ENCODE measurements at regions of chr14 and their contacts with region 1.

Region 1: GRCh38 chr14:95157327-95158189 is at the start of gene DICER1:
- DNase-seq: peak; percentile 90 to 98 (median 94)
- ATAC-seq: peak; percentile 84
- H3K4me3 ChIP-seq: peak within 1 kb of the TSS; percentile 87
- H3K4me3 Mint-ChIP-seq: peak within 1 kb of the TSS; percentile 98
- H3K27ac ChIP-seq: peak within 1 kb of the TSS; percentile 89 to 95
- H3K27ac Mint-ChIP-seq: peak within 1 kb of the TSS; percentile 99
- H3K4me1 ChIP-seq: peaks cover 40% of the 10 kb centered on the region
- H3K4me1 Mint-ChIP-seq: peaks cover 42% of the 10 kb centered on the region
- H3K27me3 ChIP-seq: no peaks in the 10 kb centered on the region
- H3K27me3 Mint-ChIP-seq: no peaks in the 10 kb centered on the region
- CTCF ChIP-seq: no peak
- total RNA-seq, gene DICER1: 75.0 to 77.1 TPM

Region 2: DNA sequence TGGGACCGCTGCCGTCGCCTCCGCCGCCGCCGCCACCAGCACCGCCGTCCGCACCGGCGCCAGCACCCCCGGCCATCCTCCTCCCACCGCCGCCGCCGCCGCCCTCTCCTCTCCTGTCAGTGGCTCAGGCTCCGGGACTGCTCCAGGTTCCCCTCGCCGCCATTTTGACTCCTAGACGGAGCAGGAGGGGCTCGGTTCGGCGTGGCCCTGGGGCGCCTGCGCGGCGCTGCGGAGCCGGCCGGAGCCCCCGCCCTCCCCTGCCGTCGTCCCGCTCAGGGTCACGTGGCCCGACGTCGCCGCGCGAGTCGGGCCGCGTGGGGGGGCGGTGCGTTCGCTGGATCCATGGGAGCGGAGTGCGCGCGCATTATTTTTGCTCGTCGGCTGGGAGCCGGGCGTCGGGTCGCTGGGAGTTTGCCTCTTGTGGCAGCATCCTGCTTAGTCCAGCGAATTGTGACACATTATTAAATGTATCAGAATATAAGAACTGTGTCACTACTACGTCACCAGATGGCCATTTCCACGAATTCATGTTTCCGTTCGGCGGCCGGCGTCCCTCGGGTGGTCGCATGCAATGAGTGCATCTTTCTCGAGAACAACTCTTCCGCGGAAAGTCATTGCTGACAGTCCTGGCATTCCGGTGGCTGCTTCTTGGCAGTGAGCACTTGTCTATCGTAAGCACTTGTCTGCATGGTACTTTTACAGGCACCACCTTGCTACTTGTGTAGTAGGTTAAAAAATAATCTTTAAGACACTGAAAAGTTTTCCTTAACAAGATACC is 1824.5 kb before region 1 on chr14 and contains the start of gene BTBD7:
- CTCF ChIA-PET with region 1: no interaction called
- POLR2A ChIA-PET with region 1: no interaction called
- intact Hi-C with region 1: loop called (anchors 5 kb)
- DNase-seq: peak; percentile 87 to 98 (median 94)
- ATAC-seq: peak; percentile 92
- H3K4me3 ChIP-seq: peak within 1 kb of the TSS; percentile 81 to 85
- H3K4me3 Mint-ChIP-seq: peak within 1 kb of the TSS; percentile 95
- H3K27ac ChIP-seq: peak within 1 kb of the TSS; percentile 80 to 83
- H3K27ac Mint-ChIP-seq: peak within 1 kb of the TSS; percentile 95
- H3K4me1 ChIP-seq: peaks cover 27% of the 10 kb centered on the region
- H3K4me1 Mint-ChIP-seq: peaks cover 50% of the 10 kb centered on the region
- H3K27me3 ChIP-seq: no peaks in the 10 kb centered on the region
- H3K27me3 Mint-ChIP-seq: no peaks in the 10 kb centered on the region
- CTCF ChIP-seq: no peak
- total RNA-seq, gene BTBD7: 22.9 to 23.5 TPM

Region 3: DNA sequence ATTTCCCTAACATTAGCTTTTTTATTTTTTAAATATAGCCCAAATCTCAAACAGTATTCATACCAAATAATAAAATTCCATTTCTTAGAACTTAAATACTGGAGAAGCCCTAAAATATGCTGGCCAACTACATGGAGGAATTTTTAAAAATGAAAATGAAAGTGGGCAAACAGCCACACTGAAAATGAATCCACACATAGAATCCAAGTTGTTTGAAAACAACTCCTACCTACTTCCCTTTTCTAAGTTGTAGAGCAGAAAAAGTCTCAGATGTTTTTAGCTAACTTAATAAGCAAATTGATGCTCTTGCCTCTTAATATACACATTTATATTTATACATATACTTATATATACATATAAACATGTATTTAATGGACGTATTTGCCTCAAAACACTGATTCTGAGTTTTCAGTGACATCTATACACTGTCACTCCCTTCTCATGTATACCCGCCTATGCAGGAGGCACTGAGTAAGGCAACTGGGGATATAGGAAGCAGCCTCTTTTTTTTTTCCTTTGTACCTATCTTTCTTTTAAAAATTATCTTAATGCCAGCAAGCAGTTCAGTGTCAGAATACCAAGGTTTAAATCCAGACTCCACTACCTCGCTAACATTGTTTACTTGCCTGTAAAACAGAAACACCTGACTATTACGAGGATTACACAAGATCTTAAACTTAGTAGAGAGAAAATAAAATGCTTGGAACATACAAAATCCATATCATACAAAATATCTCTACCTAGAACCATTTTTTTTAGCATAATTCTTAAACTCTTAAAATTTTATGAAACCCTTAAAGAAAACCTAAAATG is 13.5 kb before region 1 on chr14:
- CTCF ChIA-PET with region 1: no interaction called
- POLR2A ChIA-PET with region 1: interaction called, 6 read pairs
- intact Hi-C with region 1: loop called in 1 of 2 experiments (anchors 1 kb)
- DNase-seq: no peak
- ATAC-seq: no peak
- H3K4me3 ChIP-seq: no peak overlapping the region
- H3K4me3 Mint-ChIP-seq: no peak overlapping the region
- H3K27ac ChIP-seq: no peak overlapping the region
- H3K27ac Mint-ChIP-seq: no peak overlapping the region
- H3K4me1 ChIP-seq: peaks cover 38% of the 10 kb centered on the region
- H3K4me1 Mint-ChIP-seq: peaks cover 76% of the 10 kb centered on the region
- H3K27me3 ChIP-seq: no peaks in the 10 kb centered on the region
- H3K27me3 Mint-ChIP-seq: no peaks in the 10 kb centered on the region
- CTCF ChIP-seq: no peak

Region 4: DNA sequence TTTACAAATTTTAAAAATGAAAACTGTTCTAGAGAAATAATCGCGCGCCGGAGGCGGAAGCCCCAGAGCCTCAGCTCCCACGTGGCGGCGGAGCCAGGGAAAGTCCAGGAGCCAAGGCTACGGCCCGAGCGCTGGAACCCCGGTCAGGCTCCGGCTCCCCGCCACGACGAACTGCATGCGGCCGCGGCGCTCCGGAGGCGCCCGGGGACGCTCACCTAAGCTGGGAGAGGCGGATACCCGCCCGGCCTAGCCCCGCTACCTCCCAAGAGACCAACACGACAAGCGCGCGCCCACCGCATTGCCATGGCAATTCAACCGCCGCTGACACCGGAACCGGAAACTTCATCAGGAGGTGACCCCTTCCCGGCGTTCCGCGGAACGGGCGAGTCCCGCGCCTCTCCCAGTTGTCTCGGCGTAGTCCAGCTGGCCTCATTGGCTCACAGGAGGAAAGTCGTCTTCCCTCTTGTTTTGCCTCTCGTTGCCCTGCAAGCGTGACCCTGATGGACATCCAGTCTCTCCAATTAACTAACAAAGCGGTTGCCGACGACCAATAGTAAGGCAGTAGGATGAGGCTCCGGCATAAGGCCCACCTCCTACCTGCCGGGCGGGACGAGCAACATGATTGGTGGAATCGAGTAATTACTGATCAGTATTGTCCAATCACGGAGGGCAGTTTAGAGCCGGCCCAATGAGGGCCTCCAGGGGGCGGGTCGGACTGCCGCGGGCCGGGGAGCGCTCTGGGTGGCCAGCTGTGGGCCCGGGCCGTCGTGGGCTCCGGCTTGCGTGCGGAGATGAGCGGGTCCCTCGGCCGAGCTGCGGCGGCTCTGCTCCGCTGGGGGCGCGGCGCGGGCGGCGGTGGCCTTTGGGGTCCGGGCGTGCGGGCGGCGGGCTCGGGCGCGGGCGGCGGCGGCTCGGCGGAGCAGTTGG is 377.0 kb after region 1 on chr14 and contains the start of gene GLRX5:
- CTCF ChIA-PET with region 1: no interaction called
- POLR2A ChIA-PET with region 1: no interaction called
- intact Hi-C with region 1: loop called (anchors 1 to 5 kb)
- DNase-seq: peak; percentile 94 to 100 (median 97)
- ATAC-seq: peak; percentile 85
- H3K4me3 ChIP-seq: peak within 1 kb of the TSS; percentile 68 to 76
- H3K4me3 Mint-ChIP-seq: peak within 1 kb of the TSS; percentile 90
- H3K27ac ChIP-seq: peak within 1 kb of the TSS; percentile 77 to 92
- H3K27ac Mint-ChIP-seq: peak within 1 kb of the TSS; percentile 95
- H3K4me1 ChIP-seq: peaks cover 46% of the 10 kb centered on the region
- H3K4me1 Mint-ChIP-seq: peaks cover 71% of the 10 kb centered on the region
- H3K27me3 ChIP-seq: no peaks in the 10 kb centered on the region
- H3K27me3 Mint-ChIP-seq: no peaks in the 10 kb centered on the region
- CTCF ChIP-seq: no peak
- total RNA-seq, gene GLRX5: 13.7 to 15.2 TPM

Region 5: DNA sequence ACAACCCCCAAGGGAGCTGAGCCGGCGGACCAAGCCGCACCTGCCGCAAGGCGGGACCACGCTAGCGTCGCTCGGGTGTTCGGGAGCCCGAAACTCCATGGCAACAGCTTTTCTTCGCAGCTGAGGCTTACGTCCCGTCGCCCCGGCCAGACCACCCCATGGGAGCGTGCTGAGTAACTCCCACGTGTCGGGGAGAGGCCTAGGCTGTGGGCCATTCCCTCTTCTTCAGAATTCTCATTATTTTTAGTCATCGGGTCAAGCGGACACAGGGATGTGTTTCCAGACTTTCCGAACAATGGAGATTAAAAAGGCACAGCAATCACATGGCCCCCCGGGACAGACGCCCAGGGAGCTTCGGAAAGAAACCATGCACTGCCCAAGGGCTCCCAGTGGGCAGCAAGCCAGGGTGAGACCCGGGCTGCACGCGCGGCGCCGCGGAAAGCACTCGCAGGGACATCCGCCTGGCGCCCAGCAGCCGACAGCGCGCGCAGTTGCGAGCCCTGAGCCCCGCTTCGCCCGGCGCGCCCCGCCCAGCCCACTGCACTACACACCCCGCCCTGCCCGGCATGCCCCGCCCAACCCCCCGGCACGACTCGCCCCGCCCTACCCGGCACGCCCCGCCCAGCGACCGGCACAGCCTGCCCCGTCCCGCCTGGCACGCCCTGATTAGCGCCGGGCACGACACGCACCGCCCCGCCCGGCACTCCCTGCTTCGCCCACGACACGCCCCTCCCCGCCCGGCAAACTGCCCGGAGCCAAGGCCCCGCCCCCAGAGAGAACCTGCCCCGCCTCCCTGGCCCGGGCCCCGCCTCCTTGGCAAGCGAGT is 1233.9 kb after region 1 on chr14:
- CTCF ChIA-PET with region 1: no interaction called
- POLR2A ChIA-PET with region 1: no interaction called
- intact Hi-C with region 1: loop called (anchors 5 kb)
- DNase-seq: peak; percentile 97 to 100 (median 100)
- ATAC-seq: peak; percentile 94
- H3K4me3 ChIP-seq: peak overlapping the region; percentile 92
- H3K4me3 Mint-ChIP-seq: peak overlapping the region; percentile 90
- H3K27ac ChIP-seq: peak overlapping the region; percentile 57 to 64
- H3K27ac Mint-ChIP-seq: peak overlapping the region; percentile 49
- H3K4me1 ChIP-seq: peaks cover 12% of the 10 kb centered on the region
- H3K4me1 Mint-ChIP-seq: peaks cover 12% of the 10 kb centered on the region
- H3K27me3 ChIP-seq: no peaks in the 10 kb centered on the region
- H3K27me3 Mint-ChIP-seq: no peaks in the 10 kb centered on the region
- CTCF ChIP-seq: no peak